Common myeloid progenitor, CD34-positive (primary cell): ENCODE measurements at regions of chr17 and their contacts with region 1.

Region 1: GRCh38 chr17:3738562-3739295 is 15.0 kb downstream of the HASPIN start:
- DNase-seq: no peak
- H3K4me3 ChIP-seq: no peak overlapping the region
- H3K27ac ChIP-seq: no peak overlapping the region
- H3K4me1 ChIP-seq: peaks cover 0 to 11% (median 9%) of the 10 kb centered on the region in 4 experiments
- H3K27me3 ChIP-seq: no peaks in the 10 kb centered on the region

Region 2: GRCh38 chr17:3675886-3676285 is 62.8 kb before region 1 on chr17:
- CTCF ChIA-PET with region 1: no interaction called
- POLR2A ChIA-PET with region 1: no interaction called
- DNase-seq: no peak
- H3K4me3 ChIP-seq: no peak overlapping the region
- H3K27ac ChIP-seq: no peak overlapping the region
- H3K4me1 ChIP-seq: no peaks in the 10 kb centered on the region
- H3K27me3 ChIP-seq: no peaks in the 10 kb centered on the region

Region 3: GRCh38 chr17:3723556-3724369 is 15.0 kb before region 1 on chr17 and contains the start of gene HASPIN:
- CTCF ChIA-PET with region 1: interaction called, 28 read pairs
- POLR2A ChIA-PET with region 1: no interaction called
- DNase-seq: peak; percentile 85 to 92 (median 90)
- H3K4me3 ChIP-seq: peak within 1 kb of the TSS; percentile 81 to 99 (median 91)
- H3K27ac ChIP-seq: peak within 1 kb of the TSS; percentile 74 to 90
- H3K4me1 ChIP-seq: peaks cover 25 to 43% (median 32%) of the 10 kb centered on the region in 4 experiments
- H3K27me3 ChIP-seq: no peaks in the 10 kb centered on the region

Region 4: DNA sequence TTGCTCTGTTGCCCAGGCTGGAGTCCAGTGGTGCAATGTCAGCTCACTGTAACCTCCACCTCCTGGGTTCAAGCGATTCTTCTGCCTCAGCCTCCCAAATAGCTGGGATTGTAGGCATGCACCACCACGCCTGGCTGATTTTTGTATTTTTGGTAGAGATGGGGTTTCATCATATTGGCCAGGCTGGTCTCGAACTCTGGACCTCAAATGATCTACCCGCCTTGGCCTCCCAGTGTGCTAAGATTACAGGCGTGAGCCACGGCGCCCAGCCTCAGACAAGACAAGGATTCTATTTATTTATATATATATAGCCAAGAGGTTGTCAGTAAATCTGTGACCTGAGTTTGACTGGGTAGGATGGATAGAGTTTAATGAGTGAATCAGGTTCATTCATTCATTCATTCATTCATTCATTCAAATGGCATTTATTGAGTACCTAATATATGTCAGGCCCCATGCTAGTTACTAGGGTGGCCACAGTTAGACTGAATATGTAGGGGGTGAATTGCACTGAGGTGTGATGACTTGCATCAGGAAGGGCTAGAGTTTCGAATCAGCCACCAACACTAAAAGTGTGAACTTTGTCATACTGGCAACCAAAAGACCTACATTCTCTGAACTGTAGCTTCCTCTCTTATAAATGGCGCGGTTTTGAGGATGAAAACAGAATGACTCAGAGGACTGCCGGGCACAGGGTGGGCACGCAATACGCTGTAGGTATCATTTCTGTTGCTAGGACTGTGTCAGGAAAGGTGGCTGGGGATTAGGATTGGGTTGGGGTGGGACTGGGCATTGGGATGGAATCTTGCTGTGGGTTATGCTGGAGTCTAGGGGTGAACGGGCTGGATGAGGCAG is 24.4 kb after region 1 on chr17:
- CTCF ChIA-PET with region 1: interaction called, 37 read pairs
- POLR2A ChIA-PET with region 1: interaction called, 4 read pairs
- DNase-seq: peak in 2 of 3 donors; percentile 35 to 49
- H3K4me3 ChIP-seq: no peak overlapping the region
- H3K27ac ChIP-seq: no peak overlapping the region
- H3K4me1 ChIP-seq: peaks cover 0 to 41% (median 26%) of the 10 kb centered on the region in 4 experiments
- H3K27me3 ChIP-seq: no peaks in the 10 kb centered on the region

Region 5: GRCh38 chr17:3796110-3796821 is 57.5 kb after region 1 on chr17:
- CTCF ChIA-PET with region 1: interaction called, 10 read pairs
- POLR2A ChIA-PET with region 1: no interaction called
- DNase-seq: peak; percentile 46 to 88 (median 87)
- H3K4me3 ChIP-seq: no peak overlapping the region
- H3K27ac ChIP-seq: no peak overlapping the region
- H3K4me1 ChIP-seq: peaks cover 0 to 37% (median 22%) of the 10 kb centered on the region in 4 experiments
- H3K27me3 ChIP-seq: no peaks in the 10 kb centered on the region

Region 6: GRCh38 chr17:3818786-3819185 is 80.1 kb after region 1 on chr17:
- CTCF ChIA-PET with region 1: interaction called, 20 read pairs
- POLR2A ChIA-PET with region 1: no interaction called
- DNase-seq: no peak
- H3K4me3 ChIP-seq: no peak overlapping the region
- H3K27ac ChIP-seq: no peak overlapping the region
- H3K4me1 ChIP-seq: peaks cover 0 to 5% (median 0%) of the 10 kb centered on the region in 4 experiments
- H3K27me3 ChIP-seq: no peaks in the 10 kb centered on the region

Region 7: DNA sequence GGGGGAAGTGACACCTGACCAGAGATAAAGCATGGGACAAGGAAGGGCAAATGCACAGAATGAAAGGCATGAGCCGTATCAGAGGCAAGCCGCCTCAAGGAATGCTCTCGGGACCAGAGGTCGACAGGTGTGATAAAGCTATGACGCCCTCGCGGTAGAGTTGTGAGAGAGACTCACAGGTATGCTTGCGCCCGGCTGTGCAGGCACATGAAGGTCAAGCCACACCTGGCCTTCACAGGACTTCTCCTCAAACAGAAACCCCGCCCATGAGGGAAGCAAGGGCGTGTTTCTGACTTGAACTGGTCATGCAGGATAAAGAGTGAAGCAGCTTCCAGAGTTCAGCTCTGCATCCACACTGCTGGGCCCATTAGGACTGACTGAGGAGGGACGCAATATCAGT is 99.5 kb after region 1 on chr17:
- CTCF ChIA-PET with region 1: interaction called, 18 read pairs
- POLR2A ChIA-PET with region 1: no interaction called
- DNase-seq: no peak
- H3K4me3 ChIP-seq: no peak overlapping the region
- H3K27ac ChIP-seq: peak overlapping the region in 1 of 2 experiments; percentile 11
- H3K4me1 ChIP-seq: no peaks in the 10 kb centered on the region
- H3K27me3 ChIP-seq: no peaks in the 10 kb centered on the region

Region 8: GRCh38 chr17:3927628-3928340 is 189.1 kb after region 1 on chr17:
- CTCF ChIA-PET with region 1: no interaction called
- POLR2A ChIA-PET with region 1: no interaction called
- DNase-seq: no peak
- H3K4me3 ChIP-seq: no peak overlapping the region
- H3K27ac ChIP-seq: peak overlapping the region in 1 of 2 experiments; percentile 43
- H3K4me1 ChIP-seq: no peaks in the 10 kb centered on the region
- H3K27me3 ChIP-seq: no peaks in the 10 kb centered on the region